PC-9 (cell line): ENCODE measurements at regions of chr1 and their contacts with region 1.

Region 1: GRCh38 chr1:15152318-15153183 is 996 bp upstream of the TMEM51 start:
- DNase-seq: peak; percentile 73 to 80
- H3K4me3 ChIP-seq: peak overlapping the region; percentile 68
- H3K27ac ChIP-seq: peak overlapping the region; percentile 77
- H3K4me1 ChIP-seq: 0 out of 2 replicates have a peak, but pooled peaks cover under 1% of the 10 kb centered on the region
- H3K27me3 ChIP-seq: no peaks in the 10 kb centered on the region
- CTCF ChIP-seq: peak; percentile 61

Region 2: GRCh38 chr1:15128520-15129313 is 23.8 kb before region 1 on chr1:
- CTCF ChIA-PET with region 1: interaction called, 3 read pairs
- POLR2A ChIA-PET with region 1: interaction called, 6 read pairs
- intact Hi-C with region 1: loop called (anchors 1 kb)
- DNase-seq: peak in 1 of 2 experiments; percentile 73
- H3K4me3 ChIP-seq: no peak overlapping the region
- H3K27ac ChIP-seq: no peak overlapping the region
- H3K4me1 ChIP-seq: no peaks in the 10 kb centered on the region
- H3K27me3 ChIP-seq: no peaks in the 10 kb centered on the region
- CTCF ChIP-seq: peak; percentile 87

Region 3: DNA sequence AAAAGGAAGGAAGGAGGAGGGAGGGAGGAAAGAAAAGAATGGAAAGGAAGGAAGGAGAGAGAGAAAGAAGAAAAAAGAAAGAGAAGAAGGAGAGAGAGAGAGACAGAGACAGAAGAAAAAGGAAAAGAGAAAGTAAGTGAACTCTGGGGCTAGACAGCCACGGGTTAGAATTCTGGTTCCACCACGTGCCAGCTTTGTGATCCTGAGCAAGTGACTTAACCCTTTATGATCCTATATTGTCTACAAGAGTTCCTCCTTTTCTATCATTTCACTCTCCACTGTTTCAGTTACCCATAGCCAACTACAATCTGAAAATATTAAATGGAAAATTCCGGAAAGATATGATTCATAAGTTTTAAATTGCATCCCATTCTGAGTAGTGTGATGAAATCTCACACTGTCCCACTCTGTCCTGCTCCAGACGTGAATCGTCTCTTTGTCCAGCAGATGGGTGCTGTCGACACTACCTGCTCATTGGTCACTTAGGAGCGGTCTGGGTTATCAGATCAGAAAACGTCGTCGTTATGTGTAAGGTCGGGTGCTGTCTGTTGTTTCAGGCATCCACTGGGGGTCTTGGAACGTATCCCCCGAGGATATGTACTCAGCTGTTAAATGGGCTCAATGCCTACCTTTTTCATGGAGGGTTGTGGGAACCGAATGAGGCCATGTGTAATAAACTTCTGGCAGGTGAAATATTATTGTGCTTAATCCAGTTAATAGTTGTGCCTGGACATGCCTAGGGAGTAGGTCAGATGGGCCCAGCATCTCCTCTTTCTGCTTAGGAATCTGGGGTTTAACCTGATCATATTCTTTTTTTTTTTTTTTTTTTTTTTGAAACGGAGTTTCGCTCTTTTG is 20.1 kb after region 1 on chr1:
- CTCF ChIA-PET with region 1: interaction called, 13 read pairs
- POLR2A ChIA-PET with region 1: no interaction called
- intact Hi-C with region 1: no loop called
- DNase-seq: no peak
- H3K4me3 ChIP-seq: no peak overlapping the region
- H3K27ac ChIP-seq: no peak overlapping the region
- H3K4me1 ChIP-seq: no peaks in the 10 kb centered on the region
- H3K27me3 ChIP-seq: no peaks in the 10 kb centered on the region
- CTCF ChIP-seq: no peak

Region 4: GRCh38 chr1:15196807-15197530 is 44.4 kb after region 1 on chr1:
- CTCF ChIA-PET with region 1: no interaction called
- POLR2A ChIA-PET with region 1: no interaction called
- intact Hi-C with region 1: loop called (anchors 1 kb)
- DNase-seq: peak in 1 of 2 experiments; percentile 26
- H3K4me3 ChIP-seq: no peak overlapping the region
- H3K27ac ChIP-seq: no peak overlapping the region
- H3K4me1 ChIP-seq: peaks cover 21% of the 10 kb centered on the region
- H3K27me3 ChIP-seq: no peaks in the 10 kb centered on the region
- CTCF ChIP-seq: no peak

Region 5: GRCh38 chr1:15218287-15219279 is 66.0 kb after region 1 on chr1:
- CTCF ChIA-PET with region 1: interaction called, 10 read pairs
- POLR2A ChIA-PET with region 1: no interaction called
- intact Hi-C with region 1: no loop called
- DNase-seq: peak; percentile 68 to 86
- H3K4me3 ChIP-seq: no peak overlapping the region
- H3K27ac ChIP-seq: peak overlapping the region; percentile 63
- H3K4me1 ChIP-seq: peaks cover 30% of the 10 kb centered on the region
- H3K27me3 ChIP-seq: no peaks in the 10 kb centered on the region
- CTCF ChIP-seq: no peak

Region 6: GRCh38 chr1:15304701-15305467 is 152.3 kb after region 1 on chr1:
- CTCF ChIA-PET with region 1: no interaction called
- POLR2A ChIA-PET with region 1: no interaction called
- intact Hi-C with region 1: loop called (anchors 1 kb)
- DNase-seq: peak; percentile 35 to 44
- H3K4me3 ChIP-seq: no peak overlapping the region
- H3K27ac ChIP-seq: no peak overlapping the region
- H3K4me1 ChIP-seq: no peaks in the 10 kb centered on the region
- H3K27me3 ChIP-seq: no peaks in the 10 kb centered on the region
- CTCF ChIP-seq: peak; percentile 91

Region 7: DNA sequence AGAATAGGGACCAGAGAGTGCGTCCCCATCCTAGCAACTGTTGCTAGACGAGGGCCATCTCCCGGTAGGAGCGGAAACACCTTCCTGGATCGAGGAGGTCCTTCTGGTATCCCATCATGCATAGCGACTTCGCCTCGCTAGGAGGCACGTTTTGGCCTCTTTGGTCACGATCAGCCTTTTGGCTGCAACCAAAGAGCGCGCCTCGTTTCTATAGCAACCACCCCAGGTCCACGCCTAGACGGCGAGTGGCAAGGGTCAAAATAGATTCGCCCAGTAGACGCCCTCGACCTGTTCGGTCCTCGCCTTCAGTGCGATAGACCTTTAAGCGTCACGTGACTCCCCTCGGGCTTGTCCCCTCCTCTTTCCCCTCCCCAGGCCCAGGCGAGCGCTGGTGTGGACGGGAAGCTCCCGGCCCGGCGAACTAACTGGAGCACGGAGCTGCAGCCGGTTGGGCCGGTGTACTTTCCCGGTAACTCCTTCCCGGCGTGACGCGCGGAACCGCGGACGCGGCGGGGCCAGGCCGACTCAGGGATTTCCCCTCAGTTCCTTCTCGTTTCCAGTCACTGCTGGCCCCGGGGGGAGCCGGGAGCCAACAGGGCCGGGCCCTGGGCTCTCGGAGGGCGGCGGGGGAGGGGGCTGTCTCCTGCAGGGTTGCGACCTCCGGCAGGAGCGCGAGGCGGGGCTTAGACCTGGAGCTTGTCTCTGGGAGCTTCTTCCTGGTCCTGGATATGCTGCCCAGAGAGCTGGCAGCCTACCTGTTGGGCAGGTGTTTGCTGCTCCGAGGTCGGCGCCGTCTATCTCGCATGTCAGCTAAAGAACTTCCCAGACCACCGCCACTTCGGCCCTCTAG is 374.2 kb after region 1 on chr1 and contains the start of gene DNAJC16:
- CTCF ChIA-PET with region 1: no interaction called
- POLR2A ChIA-PET with region 1: interaction called, 3 read pairs
- intact Hi-C with region 1: loop called (anchors 10 kb)
- DNase-seq: peak; percentile 98 to 99
- H3K4me3 ChIP-seq: peak within 1 kb of the TSS; percentile 81
- H3K27ac ChIP-seq: peak within 1 kb of the TSS; percentile 69
- H3K4me1 ChIP-seq: peaks cover 17% of the 10 kb centered on the region
- H3K27me3 ChIP-seq: no peaks in the 10 kb centered on the region
- CTCF ChIP-seq: no peak
- total RNA-seq, gene DNAJC16: 12.0 and 18.8 TPM in 2 replicates